CD4-positive, alpha-beta memory T cell (primary cell): ENCODE measurements at regions of chr17 and their contacts with region 1.

Region 1: GRCh38 chr17:28726226-28727130 is at the start of gene TLCD1:
- DNase-seq: peak; percentile 86 to 91 (median 88)
- H3K4me3 ChIP-seq: peak within 1 kb of the TSS; percentile 57 to 85
- H3K4me3 Mint-ChIP-seq: peak within 1 kb of the TSS; percentile 91 to 98 (median 96)
- H3K27ac ChIP-seq: peak within 1 kb of the TSS; percentile 98
- H3K27ac Mint-ChIP-seq: peak within 1 kb of the TSS; percentile 99 to 100 (median 100)
- H3K4me1 ChIP-seq: peaks cover 46% of the 10 kb centered on the region
- H3K4me1 Mint-ChIP-seq: peaks cover 36 to 70% (median 48%) of the 10 kb centered on the region in 4 donors
- H3K27me3 ChIP-seq: no peaks in the 10 kb centered on the region
- H3K27me3 Mint-ChIP-seq: no peaks in the 10 kb centered on the region
- total RNA-seq, gene TLCD1: 1.0 to 2.2 TPM

Region 2: DNA sequence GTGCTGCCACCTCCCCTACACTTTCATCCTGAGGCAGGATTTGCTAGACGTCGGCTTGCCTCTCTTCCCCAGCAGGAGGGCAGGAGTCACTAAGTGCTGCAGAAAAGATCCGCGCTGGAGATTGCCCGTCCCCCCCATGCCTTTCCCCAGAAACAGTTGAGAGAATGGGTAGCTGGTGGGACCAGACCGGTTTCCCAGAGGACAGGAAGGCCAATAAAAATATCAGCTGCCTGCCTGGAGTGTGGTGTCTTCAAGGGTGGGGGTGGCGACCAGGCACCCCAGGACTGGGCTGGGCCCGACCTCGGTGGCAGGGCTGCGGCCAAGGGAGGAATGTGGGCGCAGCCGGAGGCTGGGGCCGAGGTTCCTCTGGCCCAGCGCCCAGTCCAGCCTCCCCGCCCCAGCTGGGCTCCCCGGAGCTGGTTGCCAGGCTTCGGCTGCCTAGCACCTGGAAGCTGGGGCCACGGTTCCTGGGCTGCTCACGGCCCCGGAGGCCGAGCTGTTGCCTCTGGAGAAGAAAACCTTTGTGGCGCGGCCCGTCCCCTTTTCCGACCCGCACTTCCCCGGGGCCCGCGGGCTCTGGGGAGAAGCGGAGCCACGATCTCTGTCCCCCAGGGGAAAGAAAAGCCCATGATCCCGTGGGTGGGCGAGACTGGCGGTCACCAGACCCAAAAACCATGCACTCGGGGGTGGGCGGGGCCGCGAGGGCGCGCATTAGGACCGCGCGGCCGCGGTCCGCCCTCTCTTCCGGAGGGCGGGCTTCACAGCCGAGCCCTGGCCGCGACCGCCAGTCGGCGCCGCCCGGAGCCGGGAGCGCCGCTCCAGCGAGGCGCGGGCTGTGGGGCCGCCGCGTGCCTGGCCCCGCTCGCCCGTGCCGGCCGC is 17.0 kb after region 1 on chr17 and contains the start of gene TRAF4:
- CTCF ChIA-PET with region 1: interaction called, 492 read pairs
- POLR2A ChIA-PET with region 1: interaction called, 528 read pairs
- intact Hi-C with region 1: loop called (anchors 1 kb)
- DNase-seq: peak; percentile 70 to 78 (median 75)
- H3K4me3 ChIP-seq: peak within 1 kb of the TSS; percentile 64 to 81
- H3K4me3 Mint-ChIP-seq: peak within 1 kb of the TSS; percentile 87 to 92 (median 90)
- H3K27ac ChIP-seq: peak within 1 kb of the TSS; percentile 67
- H3K27ac Mint-ChIP-seq: peak within 1 kb of the TSS; percentile 90 to 98 (median 96)
- H3K4me1 ChIP-seq: peaks cover 35% of the 10 kb centered on the region
- H3K4me1 Mint-ChIP-seq: peaks cover 12 to 36% (median 22%) of the 10 kb centered on the region in 4 donors
- H3K27me3 ChIP-seq: no peaks in the 10 kb centered on the region
- H3K27me3 Mint-ChIP-seq: no peaks in the 10 kb centered on the region
- total RNA-seq, gene TRAF4: 31.2 to 32.9 TPM

Region 3: DNA sequence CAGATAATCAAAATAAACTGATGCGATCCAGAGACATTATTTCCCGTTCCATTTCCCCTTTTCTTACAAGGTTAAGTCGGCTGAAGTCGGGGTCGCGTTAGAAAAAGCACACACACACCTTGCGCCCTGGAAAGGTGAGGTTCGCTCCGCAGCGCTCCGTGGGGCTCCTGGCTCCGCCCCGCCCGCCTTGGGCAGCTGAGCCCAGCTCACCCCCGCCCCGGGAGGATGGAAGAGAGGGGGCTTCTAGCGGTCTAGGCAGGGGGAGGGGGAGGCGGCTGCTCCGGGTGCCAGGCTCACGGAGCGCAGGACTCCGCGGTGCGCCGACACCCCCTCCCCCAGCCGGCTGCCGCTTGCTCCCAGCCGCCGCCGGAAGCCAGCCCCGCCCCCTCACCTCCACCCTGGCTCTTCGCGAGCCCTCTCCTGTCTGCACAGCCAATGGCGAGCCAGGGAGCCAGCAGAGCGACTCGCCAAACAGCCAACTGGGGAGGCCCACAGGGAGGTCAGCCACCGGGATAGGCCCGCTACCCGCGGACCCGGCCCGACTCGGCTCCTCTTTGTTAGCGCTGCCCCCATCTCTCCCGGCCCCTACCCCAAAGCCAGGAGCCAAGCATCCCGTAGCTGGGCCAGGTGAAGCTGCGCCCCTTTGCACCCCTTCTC is 85.7 kb after region 1 on chr17:
- CTCF ChIA-PET with region 1: interaction called, 14 read pairs
- POLR2A ChIA-PET with region 1: interaction called, 4 read pairs
- intact Hi-C with region 1: loop called (anchors 1 kb)
- DNase-seq: peak; percentile 94 to 97 (median 95)
- H3K4me3 ChIP-seq: peak overlapping the region; percentile 75 to 84
- H3K4me3 Mint-ChIP-seq: peak overlapping the region; percentile 90 to 98 (median 93)
- H3K27ac ChIP-seq: peak overlapping the region; percentile 90
- H3K27ac Mint-ChIP-seq: peak overlapping the region; percentile 94 to 100 (median 98)
- H3K4me1 ChIP-seq: peaks cover 44% of the 10 kb centered on the region
- H3K4me1 Mint-ChIP-seq: peaks cover 19 to 47% (median 37%) of the 10 kb centered on the region in 4 donors
- H3K27me3 ChIP-seq: no peaks in the 10 kb centered on the region
- H3K27me3 Mint-ChIP-seq: no peaks in the 10 kb centered on the region

Region 4: DNA sequence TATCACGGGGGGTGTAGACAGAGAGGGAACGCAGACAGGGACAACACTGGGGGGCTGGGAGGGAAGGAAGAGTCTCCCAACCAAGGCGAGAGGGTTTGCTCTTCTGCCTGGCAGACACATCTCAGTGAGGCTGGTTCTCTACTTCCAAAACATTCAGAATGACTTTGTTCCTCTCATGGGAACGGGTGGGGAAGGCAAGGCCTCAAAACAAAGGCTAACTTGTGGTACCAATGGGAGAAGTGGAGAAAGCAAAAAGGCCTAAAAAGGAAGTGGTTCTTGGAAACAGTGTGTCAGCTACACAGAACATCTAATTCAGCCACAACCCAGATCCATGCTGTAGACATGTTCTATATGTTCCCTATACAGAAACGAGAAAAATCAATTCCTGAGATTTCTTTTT is 163.5 kb after region 1 on chr17:
- CTCF ChIA-PET with region 1: interaction called, 10 read pairs
- POLR2A ChIA-PET with region 1: interaction called, 5 read pairs
- intact Hi-C with region 1: no loop called
- DNase-seq: no peak
- H3K4me3 ChIP-seq: no peak overlapping the region
- H3K4me3 Mint-ChIP-seq: no peak overlapping the region
- H3K27ac ChIP-seq: no peak overlapping the region
- H3K27ac Mint-ChIP-seq: peak overlapping the region in 5 of 7 donors; percentile 17 to 62 (median 36)
- H3K4me1 ChIP-seq: peaks cover 42% of the 10 kb centered on the region
- H3K4me1 Mint-ChIP-seq: peaks cover 27 to 66% (median 43%) of the 10 kb centered on the region in 4 donors
- H3K27me3 ChIP-seq: no peaks in the 10 kb centered on the region
- H3K27me3 Mint-ChIP-seq: no peaks in the 10 kb centered on the region

Region 5: DNA sequence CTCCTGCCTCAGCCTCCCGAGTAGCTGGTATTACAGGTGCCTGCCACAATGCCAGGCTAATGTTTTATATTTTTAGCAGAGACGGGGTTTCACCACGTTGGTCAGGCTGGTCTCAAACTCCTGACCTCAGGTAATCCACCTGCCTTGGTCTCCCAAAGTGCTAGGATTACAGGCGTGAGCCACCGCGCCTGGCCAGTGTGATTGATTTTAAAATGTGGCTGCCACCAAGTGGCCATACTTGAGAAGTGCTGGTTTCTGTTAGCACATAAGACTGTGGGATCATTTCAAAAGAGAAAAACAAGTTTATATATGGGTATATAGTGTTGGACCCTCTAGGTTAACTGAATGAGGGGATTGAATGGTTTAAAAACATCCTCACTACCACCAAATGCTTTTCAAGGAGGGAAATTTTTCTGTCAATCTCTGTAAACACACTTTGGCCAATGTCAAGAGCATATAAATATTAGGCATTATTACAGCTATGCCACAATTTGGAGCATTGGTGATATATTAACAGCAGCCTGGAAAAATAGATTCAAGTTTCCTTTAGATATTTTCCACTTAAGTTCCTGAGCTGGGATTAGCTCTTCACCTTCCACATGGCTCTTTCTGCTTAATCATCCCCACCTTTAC is 189.9 kb after region 1 on chr17:
- CTCF ChIA-PET with region 1: interaction called, 16 read pairs
- POLR2A ChIA-PET with region 1: interaction called, 7 read pairs
- intact Hi-C with region 1: loop called (anchors 1 kb)
- DNase-seq: peak; percentile 40 to 59 (median 45)
- H3K4me3 ChIP-seq: no peak overlapping the region
- H3K4me3 Mint-ChIP-seq: no peak overlapping the region
- H3K27ac ChIP-seq: no peak overlapping the region
- H3K27ac Mint-ChIP-seq: peak overlapping the region in 6 of 7 donors; percentile 70 to 91 (median 82)
- H3K4me1 ChIP-seq: no peaks in the 10 kb centered on the region
- H3K4me1 Mint-ChIP-seq: peaks cover 0 to 6% (median 4%) of the 10 kb centered on the region in 4 donors
- H3K27me3 ChIP-seq: no peaks in the 10 kb centered on the region
- H3K27me3 Mint-ChIP-seq: no peaks in the 10 kb centered on the region

Region 6: DNA sequence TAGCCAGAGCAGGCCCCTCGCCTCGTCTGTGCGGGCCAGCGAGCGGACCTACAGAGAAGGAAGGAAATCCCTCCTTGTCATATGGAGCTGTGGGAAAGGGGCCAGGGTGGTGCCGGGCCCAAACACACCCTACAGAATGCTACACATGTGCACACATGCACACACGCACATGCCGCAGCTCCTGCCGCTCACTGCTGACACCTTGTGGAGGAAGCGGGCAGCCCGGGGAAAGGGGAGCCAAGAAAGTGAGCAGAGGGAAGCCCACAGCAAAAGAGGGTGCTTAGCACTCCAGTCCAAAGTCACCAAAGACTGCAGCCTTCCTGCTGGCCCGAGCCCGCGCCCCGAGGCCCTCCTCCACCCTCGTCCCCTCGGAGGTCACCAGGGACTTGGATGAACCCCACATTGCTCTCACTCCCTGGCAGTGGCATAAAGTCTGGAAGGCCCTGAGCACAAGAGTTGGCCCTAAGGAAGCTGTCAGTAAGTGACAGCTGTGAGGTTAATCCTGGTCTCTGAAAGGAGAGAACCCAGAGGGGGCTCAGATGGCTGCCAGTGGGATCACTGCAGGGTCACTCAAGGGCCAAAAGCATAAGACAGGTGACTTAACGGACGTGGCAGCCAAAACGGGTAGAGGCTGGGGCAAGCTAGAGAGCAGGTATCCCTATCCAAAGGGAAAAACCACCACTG is 385.5 kb after region 1 on chr17:
- CTCF ChIA-PET with region 1: interaction called, 21 read pairs
- POLR2A ChIA-PET with region 1: interaction called, 8 read pairs
- intact Hi-C with region 1: loop called (anchors 2 kb)
- DNase-seq: peak; percentile 45 to 63 (median 55)
- H3K4me3 ChIP-seq: no peak overlapping the region
- H3K4me3 Mint-ChIP-seq: no peak overlapping the region
- H3K27ac ChIP-seq: no peak overlapping the region
- H3K27ac Mint-ChIP-seq: peak overlapping the region in 3 of 7 donors; percentile 8 to 70 (median 23)
- H3K4me1 ChIP-seq: peaks cover 2% of the 10 kb centered on the region
- H3K4me1 Mint-ChIP-seq: peaks cover 2 to 6% (median 5%) of the 10 kb centered on the region in 4 donors
- H3K27me3 ChIP-seq: no peaks in the 10 kb centered on the region
- H3K27me3 Mint-ChIP-seq: no peaks in the 10 kb centered on the region